PC-3 (cell line): ENCODE measurements at regions of chr7 and their contacts with region 1.

Region 1: GRCh38 chr7:93178212-93178611 is 30.0 kb upstream of the SAMD9L start:
- DNase-seq: peak; percentile 50
- ATAC-seq: peak; percentile 87
- H3K4me3 ChIP-seq: no peak overlapping the region
- H3K27ac ChIP-seq: no peak overlapping the region
- H3K4me1 ChIP-seq: no peaks in the 10 kb centered on the region
- H3K27me3 ChIP-seq: no peaks in the 10 kb centered on the region
- CTCF ChIP-seq: peak; percentile 65

Region 2: GRCh38 chr7:93203487-93203886 is 25.3 kb after region 1 on chr7:
- CTCF ChIA-PET with region 1: no interaction called
- POLR2A ChIA-PET with region 1: no interaction called
- intact Hi-C with region 1: loop called (anchors 2 kb)
- DNase-seq: peak; percentile 41
- ATAC-seq: peak; percentile 87
- H3K4me3 ChIP-seq: no peak overlapping the region
- H3K27ac ChIP-seq: peak overlapping the region; percentile 8; the same call in 1 of the 2 replicates
- H3K4me1 ChIP-seq: peaks cover 18% of the 10 kb centered on the region
- H3K27me3 ChIP-seq: no peaks in the 10 kb centered on the region
- CTCF ChIP-seq: no peak

Region 3: DNA sequence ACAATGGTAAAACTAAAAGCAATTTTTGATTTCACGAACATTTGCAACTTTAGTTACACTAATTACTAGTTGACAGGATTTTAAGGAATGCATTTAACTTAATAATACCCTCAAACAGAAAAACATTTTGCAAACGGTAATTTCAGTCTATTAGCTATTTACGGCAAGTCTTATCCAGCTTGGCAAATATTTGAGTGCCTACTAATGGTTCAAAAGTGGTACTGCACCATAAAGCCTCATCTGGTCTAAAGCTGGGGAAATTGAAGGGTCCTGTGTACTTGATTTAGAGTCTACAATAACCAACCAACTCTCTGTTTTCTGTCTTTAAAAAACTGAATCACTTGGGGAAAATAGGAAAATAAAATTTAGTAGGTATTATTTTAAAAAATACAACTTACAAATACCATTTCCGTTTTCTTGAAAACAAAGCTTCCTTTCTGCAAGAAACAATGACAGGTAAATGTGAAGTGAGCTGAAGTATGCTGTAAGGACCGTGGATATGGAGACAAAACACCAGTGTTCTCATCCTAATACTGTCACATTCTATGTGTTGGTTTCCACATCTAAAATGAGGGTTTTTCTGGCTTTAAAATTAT is 196.2 kb after region 1 on chr7:
- CTCF ChIA-PET with region 1: no interaction called
- POLR2A ChIA-PET with region 1: no interaction called
- intact Hi-C with region 1: loop called (anchors 1 kb)
- DNase-seq: peak; percentile 59
- ATAC-seq: peak; percentile 78
- H3K4me3 ChIP-seq: no peak overlapping the region
- H3K27ac ChIP-seq: no peak overlapping the region
- H3K4me1 ChIP-seq: no peaks in the 10 kb centered on the region
- H3K27me3 ChIP-seq: 0 out of 2 replicates have a peak, but pooled peaks cover 7% of the 10 kb centered on the region
- CTCF ChIP-seq: peak; percentile 81

Region 4: GRCh38 chr7:93551063-93551904 is 373.1 kb after region 1 on chr7:
- CTCF ChIA-PET with region 1: no interaction called
- POLR2A ChIA-PET with region 1: no interaction called
- intact Hi-C with region 1: loop called (anchors 1 kb)
- DNase-seq: peak; percentile 57
- ATAC-seq: peak; percentile 69
- H3K4me3 ChIP-seq: no peak overlapping the region
- H3K27ac ChIP-seq: no peak overlapping the region
- H3K4me1 ChIP-seq: no peaks in the 10 kb centered on the region
- H3K27me3 ChIP-seq: peaks cover 57% of the 10 kb centered on the region
- CTCF ChIP-seq: peak; percentile 73